Kidney (tissue), 22 donors: ENCODE measurements at regions of chr14 and their contacts with region 1.

Region 1: GRCh38 chr14:75577729-75578101 is 705 bp upstream of the FLVCR2 start:
- DNase-seq: peak; percentile 88 to 93 (median 93)
- H3K4me3 ChIP-seq: peak overlapping the region; percentile 27 to 85 (median 74)
- H3K27ac ChIP-seq: peak overlapping the region; percentile 56 to 84
- H3K4me1 ChIP-seq: peaks cover 0 to 10% (median 4%) of the 10 kb centered on the region in 3 donors
- H3K27me3 ChIP-seq: no peaks in the 10 kb centered on the region
- CTCF ChIP-seq: peak; percentile 67

Region 2: DNA sequence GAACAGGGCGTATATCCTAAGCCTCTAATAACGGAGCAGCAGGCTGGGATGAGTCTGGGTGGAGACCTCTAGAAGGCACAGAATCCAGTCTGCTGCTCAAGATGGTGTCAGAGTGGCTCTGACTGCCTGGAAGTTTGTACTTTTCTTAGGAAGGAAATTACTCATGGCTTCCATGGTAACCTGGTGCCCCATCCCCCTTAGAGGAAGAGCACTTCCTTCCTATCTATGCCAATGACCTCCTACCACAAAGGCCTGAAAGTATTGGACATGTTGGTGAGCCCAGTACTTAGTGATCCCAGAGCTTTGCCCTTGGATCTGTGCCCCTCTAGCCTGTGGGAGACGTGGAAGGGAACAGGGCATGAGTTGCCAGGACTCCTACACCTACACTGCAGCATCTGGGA is 53.9 kb before region 1 on chr14:
- intact Hi-C with region 1: no loop called
- DNase-seq: no peak
- H3K4me3 ChIP-seq: no peak overlapping the region
- H3K27ac ChIP-seq: no peak overlapping the region
- H3K4me1 ChIP-seq: peaks cover 0 to 5% (median 0%) of the 10 kb centered on the region in 3 donors
- H3K27me3 ChIP-seq: no peaks in the 10 kb centered on the region
- CTCF ChIP-seq: no peak

Region 3: GRCh38 chr14:75654127-75654732 is 76.5 kb after region 1 on chr14:
- intact Hi-C with region 1: loop called (anchors 5 kb)
- DNase-seq: peak; percentile 84 to 86 (median 84)
- H3K4me3 ChIP-seq: no peak overlapping the region
- H3K27ac ChIP-seq: peak overlapping the region in 1 of 2 donors; percentile 32
- H3K4me1 ChIP-seq: peaks cover 0 to 2% (median 0%) of the 10 kb centered on the region in 3 donors
- H3K27me3 ChIP-seq: no peaks in the 10 kb centered on the region
- CTCF ChIP-seq: peak; percentile 98

Region 4: DNA sequence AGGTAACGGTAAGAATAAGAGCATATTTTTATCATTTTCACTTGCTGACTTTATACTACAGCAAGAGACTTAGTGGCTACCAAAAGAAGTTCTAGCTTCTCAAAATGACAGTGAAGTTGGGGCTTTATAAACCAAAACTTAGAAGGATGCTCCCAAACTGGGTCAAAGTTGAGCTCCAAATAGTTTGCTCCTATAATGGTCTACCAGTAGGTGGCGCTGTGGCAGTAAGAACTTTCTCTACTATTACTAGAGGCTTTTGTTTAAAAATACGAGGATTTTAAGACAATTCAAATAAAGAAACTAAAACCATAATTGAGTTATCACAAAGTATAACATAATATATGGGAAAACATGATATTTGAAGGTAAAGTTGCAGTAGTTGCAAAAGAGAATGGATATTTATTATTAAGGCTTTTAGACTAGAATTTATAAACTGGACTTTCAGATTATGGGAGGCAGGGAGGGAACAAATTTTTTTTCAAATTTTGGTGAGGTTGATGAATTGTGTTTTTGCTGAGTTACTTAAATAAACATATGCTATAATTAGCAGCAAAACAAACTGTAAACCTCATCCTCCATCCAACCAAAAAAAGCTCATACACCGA is 329.1 kb after region 1 on chr14:
- intact Hi-C with region 1: no loop called
- DNase-seq: peak in 4 of 5 donors; percentile 50 to 83 (median 68)
- H3K4me3 ChIP-seq: no peak overlapping the region
- H3K27ac ChIP-seq: no peak overlapping the region
- H3K4me1 ChIP-seq: no peaks in the 10 kb centered on the region
- H3K27me3 ChIP-seq: no peaks in the 10 kb centered on the region
- CTCF ChIP-seq: peak; percentile 76